CD14-positive monocyte (primary cell): ENCODE measurements at regions of chr9 and their contacts with region 1.

Region 1: DNA sequence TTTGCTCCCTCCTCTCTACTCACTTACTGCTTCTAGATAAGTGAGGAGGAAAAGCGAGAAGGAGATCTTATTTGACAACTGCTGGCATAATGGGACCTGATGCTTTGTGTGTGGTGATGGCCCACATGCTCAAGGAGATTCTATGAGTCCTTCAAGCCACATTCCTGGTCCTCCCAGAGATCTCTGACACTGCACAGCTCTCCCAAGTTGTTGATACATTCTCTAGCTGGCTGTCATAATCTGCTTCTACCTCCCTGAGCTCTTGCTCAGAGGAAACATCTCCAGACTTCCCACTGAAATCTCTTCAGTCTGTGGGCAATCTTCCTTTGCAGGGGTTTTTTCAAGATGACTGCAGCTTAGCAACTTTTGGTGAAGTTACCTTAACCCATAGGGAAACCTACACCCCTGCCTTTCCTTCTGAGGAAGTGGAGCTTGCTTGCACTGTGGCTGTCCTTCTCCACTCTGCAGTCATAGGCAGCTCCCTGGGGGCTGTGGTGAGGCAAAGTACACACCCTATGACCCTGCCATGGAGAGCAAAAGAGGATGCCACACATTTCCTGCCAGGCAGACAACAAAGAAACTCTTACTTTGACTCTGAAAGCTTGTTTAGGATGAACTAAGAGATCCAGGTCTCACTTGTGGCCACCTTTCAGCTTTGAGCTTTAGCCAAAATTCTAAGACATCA is 163.8 kb downstream of the TMEM38B start:
- DNase-seq: no peak
- H3K4me3 ChIP-seq: no peak overlapping the region
- H3K4me3 Mint-ChIP-seq: no peak overlapping the region
- H3K27ac ChIP-seq: no peak overlapping the region
- H3K27ac Mint-ChIP-seq: no peak overlapping the region
- H3K4me1 ChIP-seq: peaks cover 0 to 9% of the 10 kb centered on the region in 2 donors
- H3K4me1 Mint-ChIP-seq: peaks cover 16% of the 10 kb centered on the region
- H3K27me3 ChIP-seq: no peaks in the 10 kb centered on the region
- H3K27me3 Mint-ChIP-seq: peaks cover 3 to 4% (median 3%) of the 10 kb centered on the region in 3 donors
- CTCF ChIP-seq: no peak

Region 2: GRCh38 chr9:105835721-105836120 is 22.4 kb before region 1 on chr9:
- intact Hi-C with region 1: no loop called
- DNase-seq: no peak
- H3K4me3 ChIP-seq: no peak overlapping the region
- H3K4me3 Mint-ChIP-seq: no peak overlapping the region
- H3K27ac ChIP-seq: no peak overlapping the region
- H3K27ac Mint-ChIP-seq: no peak overlapping the region
- H3K4me1 ChIP-seq: no peaks in the 10 kb centered on the region
- H3K4me1 Mint-ChIP-seq: no peaks in the 10 kb centered on the region
- H3K27me3 ChIP-seq: no peaks in the 10 kb centered on the region
- H3K27me3 Mint-ChIP-seq: no peaks in the 10 kb centered on the region
- CTCF ChIP-seq: no peak

Region 3: GRCh38 chr9:105881654-105882349 is 23.7 kb after region 1 on chr9:
- intact Hi-C with region 1: no loop called
- DNase-seq: peak; percentile 12 to 43 (median 39)
- H3K4me3 ChIP-seq: no peak overlapping the region
- H3K4me3 Mint-ChIP-seq: no peak overlapping the region
- H3K27ac ChIP-seq: no peak overlapping the region
- H3K27ac Mint-ChIP-seq: no peak overlapping the region
- H3K4me1 ChIP-seq: peaks cover 10 to 11% of the 10 kb centered on the region in 2 donors
- H3K4me1 Mint-ChIP-seq: peaks cover 20% of the 10 kb centered on the region
- H3K27me3 ChIP-seq: no peaks in the 10 kb centered on the region
- H3K27me3 Mint-ChIP-seq: peaks cover 0 to 5% (median 3%) of the 10 kb centered on the region in 3 donors
- CTCF ChIP-seq: peak; percentile 90

Region 4: DNA sequence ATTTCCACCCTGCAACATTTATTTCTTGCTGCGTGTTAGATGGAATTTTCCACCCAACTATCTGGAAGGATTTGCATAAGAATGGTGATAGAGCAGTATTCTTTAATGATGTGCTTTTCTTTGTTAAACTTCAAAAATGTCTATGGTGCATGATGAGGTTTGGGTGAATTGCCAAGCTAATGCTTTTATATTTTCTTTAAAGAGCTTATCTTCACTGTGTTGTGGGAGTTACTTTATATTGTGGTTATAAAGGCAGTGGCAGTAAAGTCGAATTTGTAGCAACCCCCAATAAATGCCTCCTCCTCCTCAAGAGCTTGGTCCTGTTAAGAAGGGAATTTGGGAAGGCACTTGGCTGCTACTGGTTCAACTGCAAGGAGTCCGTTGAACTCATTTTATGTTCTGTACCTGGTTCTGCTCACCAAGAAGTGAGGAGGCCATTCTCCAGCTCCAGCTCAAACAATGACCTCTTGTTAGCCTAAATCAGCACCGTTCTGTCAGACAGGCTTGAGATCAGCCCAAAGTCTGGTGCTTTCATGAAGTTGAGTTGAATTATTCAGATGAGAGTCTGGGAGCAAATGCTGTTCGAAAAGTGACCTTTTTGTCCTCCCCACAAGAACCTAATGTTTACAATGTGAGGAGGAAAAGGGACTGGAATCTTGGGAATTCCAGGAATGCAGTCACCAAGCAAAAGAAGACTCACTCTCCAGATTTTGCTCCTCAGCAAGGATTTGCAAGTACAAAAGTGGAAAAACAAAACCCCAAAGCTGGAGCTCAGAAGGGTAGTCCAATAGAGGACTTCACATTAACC is 53.2 kb after region 1 on chr9:
- intact Hi-C with region 1: loop called in 1 of 2 experiments (anchors 10 kb)
- DNase-seq: no peak
- H3K4me3 ChIP-seq: no peak overlapping the region
- H3K4me3 Mint-ChIP-seq: no peak overlapping the region
- H3K27ac ChIP-seq: no peak overlapping the region
- H3K27ac Mint-ChIP-seq: no peak overlapping the region
- H3K4me1 ChIP-seq: no peaks in the 10 kb centered on the region
- H3K4me1 Mint-ChIP-seq: no peaks in the 10 kb centered on the region
- H3K27me3 ChIP-seq: no peaks in the 10 kb centered on the region
- H3K27me3 Mint-ChIP-seq: peaks cover 0 to 3% (median 0%) of the 10 kb centered on the region in 3 donors
- CTCF ChIP-seq: no peak